ENCODE measurements at regions of chr1 and their contacts with region 1.

Region 1: GRCh38 chr1:172826096-172826743 is 167.3 kb downstream of the FASLG start:
- DNase-seq: peak in 1 of 9 donors; percentile 15
- ATAC-seq: peak; percentile 49
- H3K4me3 ChIP-seq: no peak overlapping the region
- H3K4me3 Mint-ChIP-seq: no peak overlapping the region
- H3K27ac ChIP-seq: no peak overlapping the region
- H3K27ac Mint-ChIP-seq: no peak overlapping the region
- H3K4me1 ChIP-seq: peaks cover 4 to 11% of the 10 kb centered on the region in 2 donors
- H3K4me1 Mint-ChIP-seq: peaks cover 0 to 10% (median 0%) of the 10 kb centered on the region in 7 donors
- H3K27me3 ChIP-seq: no peaks in the 10 kb centered on the region
- H3K27me3 Mint-ChIP-seq: peaks cover 0 to 28% (median 0%) of the 10 kb centered on the region in 5 donors

Region 2: GRCh38 chr1:172638885-172639831 is 187.1 kb before region 1 on chr1:
- CTCF ChIA-PET with region 1: no interaction called
- POLR2A ChIA-PET with region 1: no interaction called
- intact Hi-C with region 1: no loop called
- DNase-seq: peak; percentile 12 to 85 (median 79)
- ATAC-seq: peak; percentile 87
- H3K4me3 ChIP-seq: peak overlapping the region; percentile 32
- H3K4me3 Mint-ChIP-seq: peak overlapping the region; percentile 46 to 88 (median 78)
- H3K27ac ChIP-seq: peak overlapping the region; percentile 43
- H3K27ac Mint-ChIP-seq: peak overlapping the region; percentile 88 to 94 (median 91)
- H3K4me1 ChIP-seq: peaks cover 63 to 72% of the 10 kb centered on the region in 2 donors
- H3K4me1 Mint-ChIP-seq: peaks cover 54 to 87% (median 81%) of the 10 kb centered on the region in 7 donors
- H3K27me3 ChIP-seq: no peaks in the 10 kb centered on the region
- H3K27me3 Mint-ChIP-seq: peaks cover 0 to 29% (median 0%) of the 10 kb centered on the region in 5 donors

Region 3: DNA sequence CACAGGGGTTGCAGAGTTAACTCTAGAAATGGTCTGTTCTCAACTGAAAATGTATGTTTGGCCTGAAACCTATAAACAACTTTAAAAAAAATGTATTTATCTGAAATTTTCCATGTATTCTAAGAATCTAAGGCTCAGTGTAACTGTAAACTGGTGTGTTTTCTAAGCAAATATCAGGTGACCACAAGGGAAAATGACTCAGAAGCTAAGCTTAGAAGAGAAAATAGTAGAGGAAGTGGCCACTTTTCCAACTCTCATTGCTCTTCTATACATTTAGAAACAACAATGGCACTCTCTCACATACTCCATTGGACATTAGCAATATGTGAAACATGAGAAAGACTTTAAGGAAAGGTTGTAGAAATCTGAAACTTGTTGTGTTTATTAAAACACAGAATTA is 217.0 kb after region 1 on chr1:
- CTCF ChIA-PET with region 1: no interaction called
- POLR2A ChIA-PET with region 1: no interaction called
- intact Hi-C with region 1: loop called in 1 of 2 experiments (anchors 10 kb)
- DNase-seq: no peak
- ATAC-seq: no peak
- H3K4me3 ChIP-seq: no peak overlapping the region
- H3K4me3 Mint-ChIP-seq: no peak overlapping the region
- H3K27ac ChIP-seq: no peak overlapping the region
- H3K27ac Mint-ChIP-seq: no peak overlapping the region
- H3K4me1 ChIP-seq: no peaks in the 10 kb centered on the region
- H3K4me1 Mint-ChIP-seq: peaks cover 0 to 25% (median 7%) of the 10 kb centered on the region in 7 donors
- H3K27me3 ChIP-seq: no peaks in the 10 kb centered on the region
- H3K27me3 Mint-ChIP-seq: peaks cover 0 to 11% (median 0%) of the 10 kb centered on the region in 5 donors

Region 4: DNA sequence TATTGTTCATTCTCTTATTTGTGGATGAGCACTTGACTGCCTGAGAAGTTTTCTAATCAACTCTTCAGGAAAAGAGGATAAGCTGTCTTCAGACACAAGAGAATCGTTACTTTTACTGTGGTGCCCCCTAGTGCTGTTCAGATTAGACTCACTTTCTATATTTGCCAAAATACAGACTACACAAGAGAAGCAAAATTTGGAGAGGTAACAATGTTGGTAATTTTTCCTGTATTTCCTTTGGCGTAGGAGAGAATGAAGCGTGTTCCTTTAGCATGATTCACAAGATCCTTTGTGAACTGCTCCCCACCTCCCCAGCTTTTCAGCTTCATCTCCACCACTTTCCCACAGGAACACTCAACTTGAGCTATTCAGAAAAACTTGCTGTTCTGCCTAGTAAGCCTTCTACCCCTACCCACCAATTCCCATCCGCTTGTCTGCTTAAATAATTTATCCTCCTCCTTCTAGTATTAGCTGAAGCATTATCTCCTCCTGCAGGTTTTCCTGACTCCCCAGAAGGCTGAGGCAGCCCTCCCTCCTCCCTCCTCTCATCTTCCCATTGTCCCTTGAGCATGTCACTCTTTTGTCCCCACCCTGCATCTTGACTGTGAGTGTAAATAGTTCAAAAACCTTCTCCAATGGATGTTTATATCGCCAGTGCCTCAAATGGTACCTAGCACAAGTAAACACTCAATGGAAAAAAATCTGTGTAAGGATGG is 376.4 kb after region 1 on chr1:
- CTCF ChIA-PET with region 1: interaction called, 42 read pairs
- POLR2A ChIA-PET with region 1: interaction called, 3 read pairs
- intact Hi-C with region 1: loop called (anchors 1 kb)
- DNase-seq: peak in 1 of 9 donors; percentile 8
- ATAC-seq: no peak
- H3K4me3 ChIP-seq: no peak overlapping the region
- H3K4me3 Mint-ChIP-seq: peak overlapping the region in 1 of 10 donors; percentile 26
- H3K27ac ChIP-seq: no peak overlapping the region
- H3K27ac Mint-ChIP-seq: peak overlapping the region in 7 of 9 donors; percentile 1 to 99 (median 43)
- H3K4me1 ChIP-seq: peaks cover 32 to 37% of the 10 kb centered on the region in 2 donors
- H3K4me1 Mint-ChIP-seq: peaks cover 28 to 52% (median 46%) of the 10 kb centered on the region in 7 donors
- H3K27me3 ChIP-seq: no peaks in the 10 kb centered on the region
- H3K27me3 Mint-ChIP-seq: peaks cover 0 to 31% (median 0%) of the 10 kb centered on the region in 5 donors

Region 5: GRCh38 chr1:173269490-173270230 is 443.4 kb after region 1 on chr1:
- CTCF ChIA-PET with region 1: no interaction called
- POLR2A ChIA-PET with region 1: no interaction called
- intact Hi-C with region 1: loop called in 1 of 2 experiments (anchors 5 kb)
- DNase-seq: no peak
- ATAC-seq: no peak
- H3K4me3 ChIP-seq: no peak overlapping the region
- H3K4me3 Mint-ChIP-seq: no peak overlapping the region
- H3K27ac ChIP-seq: no peak overlapping the region
- H3K27ac Mint-ChIP-seq: no peak overlapping the region
- H3K4me1 ChIP-seq: no peaks in the 10 kb centered on the region
- H3K4me1 Mint-ChIP-seq: peaks cover 0 to 3% (median 0%) of the 10 kb centered on the region in 7 donors
- H3K27me3 ChIP-seq: no peaks in the 10 kb centered on the region
- H3K27me3 Mint-ChIP-seq: peaks cover 0 to 3% (median 0%) of the 10 kb centered on the region in 5 donors

Region 6: GRCh38 chr1:173409613-173410012 is 583.4 kb after region 1 on chr1:
- CTCF ChIA-PET with region 1: no interaction called
- POLR2A ChIA-PET with region 1: no interaction called
- intact Hi-C with region 1: loop called in 1 of 2 experiments (anchors 5 kb)
- DNase-seq: peak in 1 of 9 donors; percentile 11
- ATAC-seq: peak; percentile 71
- H3K4me3 ChIP-seq: no peak overlapping the region
- H3K4me3 Mint-ChIP-seq: peak overlapping the region in 4 of 10 donors; percentile 7 to 23 (median 20)
- H3K27ac ChIP-seq: no peak overlapping the region
- H3K27ac Mint-ChIP-seq: peak overlapping the region in 2 of 9 donors; percentile 12 to 24
- H3K4me1 ChIP-seq: peaks cover 7 to 8% of the 10 kb centered on the region in 2 donors
- H3K4me1 Mint-ChIP-seq: peaks cover 7 to 37% (median 32%) of the 10 kb centered on the region in 7 donors
- H3K27me3 ChIP-seq: no peaks in the 10 kb centered on the region
- H3K27me3 Mint-ChIP-seq: peaks cover 0 to 2% (median 0%) of the 10 kb centered on the region in 5 donors

Measured in naive thymus-derived CD4-positive, alpha-beta T cell (primary cell).